ENCODE measurements at regions of chr3 and their contacts with region 1.

Region 1: DNA sequence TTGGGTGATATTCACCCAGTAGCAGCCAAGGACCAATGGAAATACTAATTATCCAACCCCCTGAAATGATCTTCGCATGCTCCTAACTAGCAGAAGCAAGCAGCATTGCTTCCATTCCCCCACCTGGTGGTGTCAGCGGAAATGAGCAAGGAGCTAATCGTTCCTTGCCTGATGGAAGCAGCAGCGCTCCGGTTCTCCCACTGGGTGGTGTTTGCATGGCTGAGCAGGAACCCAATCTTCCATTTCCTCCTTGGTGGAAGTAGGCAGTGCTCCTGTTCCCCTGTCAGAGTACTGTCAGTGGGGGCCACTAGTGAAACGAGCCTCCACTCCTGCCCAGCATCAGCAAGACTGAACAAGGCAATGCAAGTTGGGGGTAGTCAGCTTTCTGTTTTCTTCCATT is 311.5 kb downstream of the CACNA2D3 start:
- DNase-seq: no peak
- H3K4me3 Mint-ChIP-seq: no peak overlapping the region
- H3K27ac Mint-ChIP-seq: no peak overlapping the region
- H3K4me1 Mint-ChIP-seq: no peaks in the 10 kb centered on the region
- H3K27me3 Mint-ChIP-seq: no peaks in the 10 kb centered on the region

Region 2: DNA sequence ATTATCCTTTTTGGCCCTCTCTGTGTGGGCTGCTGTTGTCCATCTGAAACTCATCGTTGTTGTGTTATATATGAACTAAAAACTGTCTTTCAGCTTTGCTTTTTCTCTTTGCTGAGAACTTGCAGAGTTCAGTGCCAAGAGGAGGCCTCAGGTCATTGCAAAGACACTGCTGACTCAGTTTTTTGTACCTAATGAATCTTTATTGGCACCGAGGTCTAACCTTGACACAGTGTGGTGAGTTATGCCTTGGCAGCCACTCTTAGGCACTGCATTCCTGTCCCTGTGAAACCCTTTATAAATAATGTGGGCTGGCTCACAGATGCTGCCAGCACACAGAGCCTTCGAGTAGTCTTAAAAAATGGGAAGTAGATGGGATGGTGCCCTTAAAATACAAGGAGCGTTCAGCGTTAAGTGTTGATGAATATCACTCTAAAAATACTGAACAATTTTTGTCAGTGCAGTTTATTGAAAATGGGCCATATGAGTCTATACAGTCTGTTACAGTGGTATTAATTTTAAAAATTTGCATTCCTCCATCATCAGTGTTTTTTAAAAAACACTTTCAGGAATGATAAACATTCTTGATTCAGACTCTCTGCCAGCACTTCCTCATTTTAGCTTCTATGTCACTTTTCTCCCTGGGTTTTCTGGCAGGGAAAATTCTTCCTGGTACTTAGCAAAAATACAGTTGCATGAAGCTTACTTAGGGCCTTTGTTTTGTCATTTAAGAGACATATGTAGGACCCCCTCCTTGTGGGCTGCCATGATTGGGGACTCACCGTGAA is 77.4 kb before region 1 on chr3:
- intact Hi-C with region 1: no loop called
- DNase-seq: no peak
- H3K4me3 Mint-ChIP-seq: no peak overlapping the region
- H3K27ac Mint-ChIP-seq: no peak overlapping the region
- H3K4me1 Mint-ChIP-seq: no peaks in the 10 kb centered on the region
- H3K27me3 Mint-ChIP-seq: no peaks in the 10 kb centered on the region

Region 3: GRCh38 chr3:55091381-55092225 is 657.8 kb after region 1 on chr3:
- intact Hi-C with region 1: no loop called
- DNase-seq: no peak
- H3K4me3 Mint-ChIP-seq: no peak overlapping the region
- H3K27ac Mint-ChIP-seq: no peak overlapping the region
- H3K4me1 Mint-ChIP-seq: no peaks in the 10 kb centered on the region
- H3K27me3 Mint-ChIP-seq: no peaks in the 10 kb centered on the region

Region 4: GRCh38 chr3:55804170-55805095 is 1370.6 kb after region 1 on chr3:
- intact Hi-C with region 1: loop called (anchors 10 kb)
- DNase-seq: no peak
- H3K4me3 Mint-ChIP-seq: no peak overlapping the region
- H3K27ac Mint-ChIP-seq: no peak overlapping the region
- H3K4me1 Mint-ChIP-seq: no peaks in the 10 kb centered on the region
- H3K27me3 Mint-ChIP-seq: no peaks in the 10 kb centered on the region

Measured in activated T-helper 1 cell treated with anti-CD3 and anti-CD28 coated beads, Interleukin-12 subunit alpha, Interleukin-12 subunit beta, Interleukin-2, Interleukin-4 antibody, amounts not matched to agents 30 ng/mL and 10 ng/mL and 1 ng/mL, durations not matched to agents 14 hours and 24 hours and 36 hours (primary cell).